ENCODE measurements at regions of chr22 and their contacts with region 1.

Region 1: GRCh38 chr22:41360126-41360525 is 21.6 kb upstream of the TEF start:
- DNase-seq: no peak
- ATAC-seq: no peak; the same call in 2 of the 3 replicates
- H3K4me3 ChIP-seq: no peak overlapping the region
- H3K27ac ChIP-seq: no peak overlapping the region
- H3K4me1 ChIP-seq: peaks cover 0 to 24% of the 10 kb centered on the region in 2 experiments; a peak in 4 of 5 replicates
- H3K27me3 ChIP-seq: no peaks in the 10 kb centered on the region
- CTCF ChIP-seq: no peak
- EP300 ChIP-seq: no peak
- POLR2A ChIP-seq: no peak
- RAD21 ChIP-seq: no peak

Region 2: GRCh38 chr22:40844951-40845350 is 515.2 kb before region 1 on chr22:
- CTCF ChIA-PET with region 1: no interaction called
- POLR2A ChIA-PET with region 1: no interaction called
- in situ Hi-C with region 1: no loop called
- intact Hi-C with region 1: no loop called
- DNase-seq: no peak
- ATAC-seq: no peak
- H3K4me3 ChIP-seq: no peak overlapping the region
- H3K27ac ChIP-seq: no peak overlapping the region
- H3K4me1 ChIP-seq: no peaks in the 10 kb centered on the region; a peak in 1 of 5 replicates
- H3K27me3 ChIP-seq: no peaks in the 10 kb centered on the region
- CTCF ChIP-seq: no peak
- EP300 ChIP-seq: no peak
- POLR2A ChIP-seq: no peak
- RAD21 ChIP-seq: no peak

Region 3: GRCh38 chr22:41350087-41350486 is 10.0 kb before region 1 on chr22:
- CTCF ChIA-PET with region 1: no interaction called
- POLR2A ChIA-PET with region 1: interaction called, 10 read pairs
- in situ Hi-C with region 1: no loop called
- intact Hi-C with region 1: no loop called
- DNase-seq: peak; percentile 27 to 47 (median 44)
- ATAC-seq: peak; percentile 81
- H3K4me3 ChIP-seq: no peak overlapping the region
- H3K27ac ChIP-seq: peak overlapping the region; percentile 35; the same call in 1 of the 3 replicates
- H3K4me1 ChIP-seq: peaks cover 10 to 28% of the 10 kb centered on the region in 2 experiments; a peak in 4 of 5 replicates
- H3K27me3 ChIP-seq: no peaks in the 10 kb centered on the region
- CTCF ChIP-seq: no peak
- EP300 ChIP-seq: no peak
- POLR2A ChIP-seq: no peak
- RAD21 ChIP-seq: no peak